ENCODE measurements at regions of chr10 and their contacts with region 1.

Region 1: GRCh38 chr10:61744469-61744868 is 81.7 kb downstream of the CABCOCO1 start:
- DNase-seq: no peak
- H3K4me3 ChIP-seq: no peak overlapping the region
- H3K27ac ChIP-seq: no peak overlapping the region
- H3K4me1 ChIP-seq: no peaks in the 10 kb centered on the region
- H3K27me3 ChIP-seq: no peaks in the 10 kb centered on the region
- CTCF ChIP-seq: peak in 1 of 6 experiments; percentile 46
- POLR2A ChIP-seq: no peak

Region 2: GRCh38 chr10:61835069-61835945 is 90.8 kb after region 1 on chr10:
- intact Hi-C with region 1: loop called (anchors 10 kb)
- DNase-seq: no peak
- H3K4me3 ChIP-seq: no peak overlapping the region
- H3K27ac ChIP-seq: peak overlapping the region; percentile 77 to 83 (median 82)
- H3K4me1 ChIP-seq: peaks cover 23 to 64% (median 31%) of the 10 kb centered on the region in 3 donors
- H3K27me3 ChIP-seq: no peaks in the 10 kb centered on the region
- CTCF ChIP-seq: peak in 5 of 6 experiments; percentile 30 to 78 (median 60)
- POLR2A ChIP-seq: no peak

Measured in esophagus squamous epithelium (tissue), 5 donors.